ENCODE measurements at regions of chr12 and their contacts with region 1.

Region 1: GRCh38 chr12:92408072-92408900 is 262.6 kb upstream of the BTG1 start:
- H3K4me3 Mint-ChIP-seq: no peak overlapping the region
- H3K27ac Mint-ChIP-seq: no peak overlapping the region
- H3K4me1 Mint-ChIP-seq: peaks cover 17% of the 10 kb centered on the region
- H3K27me3 Mint-ChIP-seq: peaks cover 6% of the 10 kb centered on the region

Region 2: DNA sequence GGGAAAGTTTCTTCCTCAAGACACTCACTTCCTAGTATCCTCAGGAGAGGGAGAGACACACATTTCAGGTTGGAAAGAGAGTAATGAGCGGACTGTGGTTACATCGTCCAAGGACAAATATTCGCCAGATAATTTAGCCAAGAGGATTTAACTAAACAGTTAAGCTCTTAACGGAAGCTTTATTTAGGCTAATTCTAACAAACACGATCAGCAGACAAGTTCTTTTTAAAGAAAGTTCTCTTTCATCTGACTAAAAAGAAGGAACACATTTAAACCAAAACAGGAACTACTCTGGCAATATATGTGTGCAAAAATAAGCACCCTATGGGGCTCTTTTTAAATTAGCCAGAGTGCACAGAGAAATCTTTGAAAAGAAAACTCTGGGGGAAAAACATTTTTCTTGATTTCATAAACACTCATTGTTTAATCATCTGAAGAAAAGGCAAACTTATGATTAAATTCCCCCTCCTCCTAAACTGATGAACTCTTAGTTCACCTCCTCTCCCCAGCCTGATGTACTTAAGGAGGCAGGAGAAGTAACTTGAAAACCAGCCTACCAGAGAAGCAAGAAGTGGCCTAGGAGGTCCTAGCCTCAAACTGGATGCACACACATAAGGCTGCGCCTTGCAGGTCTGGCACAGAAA is 249.4 kb before region 1 on chr12:
- intact Hi-C with region 1: loop called (anchors 5 kb)
- H3K4me3 Mint-ChIP-seq: peak overlapping the region; percentile 62
- H3K27ac Mint-ChIP-seq: peak overlapping the region; percentile 68
- H3K4me1 Mint-ChIP-seq: peaks cover 60% of the 10 kb centered on the region
- H3K27me3 Mint-ChIP-seq: peaks cover 20% of the 10 kb centered on the region

Region 3: GRCh38 chr12:92363295-92364146 is 44.8 kb before region 1 on chr12:
- intact Hi-C with region 1: no loop called
- H3K4me3 Mint-ChIP-seq: peak overlapping the region; percentile 69
- H3K27ac Mint-ChIP-seq: peak overlapping the region; percentile 89
- H3K4me1 Mint-ChIP-seq: peaks cover 38% of the 10 kb centered on the region
- H3K27me3 Mint-ChIP-seq: no peaks in the 10 kb centered on the region

Region 4: GRCh38 chr12:92446083-92446460 is 37.8 kb after region 1 on chr12:
- intact Hi-C with region 1: no loop called
- H3K4me3 Mint-ChIP-seq: no peak overlapping the region
- H3K27ac Mint-ChIP-seq: peak overlapping the region; percentile 82
- H3K4me1 Mint-ChIP-seq: peaks cover 21% of the 10 kb centered on the region
- H3K27me3 Mint-ChIP-seq: no peaks in the 10 kb centered on the region

Region 5: GRCh38 chr12:92582475-92582874 is 174.2 kb after region 1 on chr12:
- intact Hi-C with region 1: no loop called
- H3K4me3 Mint-ChIP-seq: no peak overlapping the region
- H3K27ac Mint-ChIP-seq: no peak overlapping the region
- H3K4me1 Mint-ChIP-seq: peaks cover 10% of the 10 kb centered on the region
- H3K27me3 Mint-ChIP-seq: no peaks in the 10 kb centered on the region

Measured in dendritic cell treated with granulocyte-macrophage colony-stimulating factor and Interleukin-4, amounts not matched to agents 40 ng/mL and 50 ng/mL, for 4 days (primary cell).